Naive thymus-derived CD4-positive, alpha-beta T cell (primary cell): ENCODE measurements at regions of chr11 and their contacts with region 1.

Region 1: DNA sequence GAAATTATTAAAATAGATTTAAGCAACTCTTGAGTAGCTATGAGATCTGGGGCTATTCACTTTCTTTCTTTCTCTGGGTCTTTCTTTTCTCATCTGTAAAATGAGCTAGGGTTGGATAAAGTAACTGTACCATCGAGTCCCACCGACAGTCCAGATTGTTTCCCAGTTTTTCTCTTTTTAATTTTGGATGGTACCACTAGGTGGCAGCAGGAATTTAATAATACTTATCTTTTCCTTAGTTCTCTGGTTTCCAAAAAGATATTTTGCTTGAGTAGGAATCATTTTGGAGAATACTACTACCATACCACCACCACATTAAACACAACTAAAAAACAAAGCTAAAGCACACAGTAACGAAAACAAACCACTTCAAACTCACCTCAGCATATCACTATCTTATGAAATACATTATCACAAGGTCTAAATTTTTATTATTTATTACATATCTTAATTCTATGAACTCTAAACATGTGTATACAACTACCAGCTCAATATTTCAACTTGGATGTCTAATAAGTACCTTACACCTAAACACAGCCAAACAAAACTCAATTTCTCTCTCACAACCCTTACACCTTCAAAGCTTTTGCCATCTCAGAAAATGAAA is 584.0 kb downstream of the KCNA4 start:
- DNase-seq: no peak
- ATAC-seq: no peak
- H3K4me3 ChIP-seq: no peak overlapping the region
- H3K4me3 Mint-ChIP-seq: no peak overlapping the region
- H3K27ac ChIP-seq: no peak overlapping the region
- H3K27ac Mint-ChIP-seq: no peak overlapping the region
- H3K4me1 ChIP-seq: no peaks in the 10 kb centered on the region
- H3K4me1 Mint-ChIP-seq: no peaks in the 10 kb centered on the region
- H3K27me3 ChIP-seq: no peaks in the 10 kb centered on the region
- H3K27me3 Mint-ChIP-seq: no peaks in the 10 kb centered on the region

Region 2: DNA sequence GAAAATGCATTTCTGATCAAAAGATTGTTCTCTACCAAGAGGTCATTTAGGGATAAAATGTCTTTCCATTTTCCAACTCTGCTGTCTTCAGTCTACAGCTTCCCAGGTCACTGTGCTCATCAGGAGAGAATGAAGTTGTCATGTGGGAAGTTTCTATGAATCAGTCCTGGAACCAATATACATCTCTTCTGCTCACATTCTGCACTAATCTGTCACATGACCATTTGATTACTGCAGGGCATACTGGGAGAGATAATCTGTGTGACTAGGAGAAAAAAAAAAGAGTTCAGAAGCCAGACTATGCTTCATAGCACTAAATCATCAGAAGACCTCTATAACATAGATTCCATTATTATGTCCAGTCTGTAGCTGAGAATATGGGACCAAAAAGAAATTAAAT is 27.5 kb before region 1 on chr11:
- CTCF ChIA-PET with region 1: no interaction called
- POLR2A ChIA-PET with region 1: no interaction called
- intact Hi-C with region 1: no loop called
- DNase-seq: no peak
- ATAC-seq: no peak
- H3K4me3 ChIP-seq: no peak overlapping the region
- H3K4me3 Mint-ChIP-seq: no peak overlapping the region
- H3K27ac ChIP-seq: no peak overlapping the region
- H3K27ac Mint-ChIP-seq: no peak overlapping the region
- H3K4me1 ChIP-seq: no peaks in the 10 kb centered on the region
- H3K4me1 Mint-ChIP-seq: no peaks in the 10 kb centered on the region
- H3K27me3 ChIP-seq: no peaks in the 10 kb centered on the region
- H3K27me3 Mint-ChIP-seq: no peaks in the 10 kb centered on the region

Region 3: DNA sequence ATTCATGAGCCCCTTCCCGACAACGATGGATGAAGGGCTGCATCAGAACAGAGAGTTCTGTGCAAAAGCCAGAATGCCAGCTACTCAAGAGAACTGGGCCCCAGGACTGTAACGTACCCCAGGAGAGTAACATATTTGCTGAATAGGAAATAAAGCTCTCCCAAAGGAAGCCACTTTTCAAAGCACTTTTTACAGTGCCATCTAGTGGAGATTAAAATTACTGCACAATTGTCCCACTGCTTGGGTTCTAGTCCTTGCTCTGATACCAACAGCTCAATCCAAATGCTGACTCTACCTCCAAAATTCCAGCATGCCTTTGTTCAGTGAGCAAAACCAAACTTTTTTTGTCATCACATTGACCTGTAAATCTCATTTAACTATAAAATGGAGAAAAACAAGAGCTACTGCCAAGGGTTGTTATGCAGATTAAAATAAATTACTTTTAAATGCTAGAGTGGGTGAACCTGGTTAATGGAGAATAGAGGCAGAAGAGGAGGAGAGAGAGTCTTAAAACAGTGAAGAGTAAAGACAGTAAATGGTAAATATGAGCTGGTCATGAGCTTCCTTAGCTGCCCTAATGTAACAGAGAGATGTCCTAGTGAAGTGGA is 710.4 kb after region 1 on chr11:
- CTCF ChIA-PET with region 1: no interaction called
- POLR2A ChIA-PET with region 1: no interaction called
- intact Hi-C with region 1: loop called in 1 of 2 experiments (anchors 5 kb)
- DNase-seq: no peak
- ATAC-seq: peak; percentile 42
- H3K4me3 ChIP-seq: no peak overlapping the region
- H3K4me3 Mint-ChIP-seq: no peak overlapping the region
- H3K27ac ChIP-seq: no peak overlapping the region
- H3K27ac Mint-ChIP-seq: no peak overlapping the region
- H3K4me1 ChIP-seq: no peaks in the 10 kb centered on the region
- H3K4me1 Mint-ChIP-seq: no peaks in the 10 kb centered on the region
- H3K27me3 ChIP-seq: no peaks in the 10 kb centered on the region
- H3K27me3 Mint-ChIP-seq: peaks cover 0 to 22% (median 7%) of the 10 kb centered on the region in 5 donors